Prostate gland (tissue), 2 donors: ENCODE measurements at regions of chr3 and their contacts with region 1.

Region 1: GRCh38 chr3:49133226-49133951 is 539 bp upstream of the LAMB2 start:
- DNase-seq: peak; percentile 83
- H3K4me3 ChIP-seq: peak overlapping the region; percentile 43 to 63
- H3K27ac ChIP-seq: peak overlapping the region; percentile 81
- H3K4me1 ChIP-seq: peaks cover 5% of the 10 kb centered on the region
- H3K27me3 ChIP-seq: no peaks in the 10 kb centered on the region
- CTCF ChIP-seq: peak in 1 of 4 experiments; percentile 2
- POLR2A ChIP-seq: peak; percentile 17

Region 2: DNA sequence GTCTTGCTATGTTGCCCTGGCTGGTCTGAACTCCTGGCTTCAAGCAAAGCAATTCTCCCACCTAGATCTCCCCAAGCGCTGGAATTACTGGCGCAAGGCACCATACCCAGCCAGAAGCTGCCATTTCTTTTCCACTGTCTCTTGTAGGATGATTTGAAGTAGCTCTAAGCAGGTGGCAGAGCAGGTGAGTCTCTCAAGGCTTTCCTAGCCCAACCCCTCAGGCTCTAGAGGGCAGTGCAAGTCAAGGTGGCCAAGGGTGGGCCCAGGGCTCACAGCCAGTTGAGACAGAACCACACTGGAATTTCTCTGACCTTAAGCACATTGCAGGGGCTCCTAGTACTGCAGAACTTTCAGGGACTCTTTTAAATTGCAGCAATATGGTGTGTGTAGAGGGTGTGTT is 321.1 kb after region 1 on chr3:
- intact Hi-C with region 1: no loop called
- DNase-seq: no peak
- H3K4me3 ChIP-seq: no peak overlapping the region
- H3K27ac ChIP-seq: no peak overlapping the region
- H3K4me1 ChIP-seq: no peaks in the 10 kb centered on the region
- H3K27me3 ChIP-seq: no peaks in the 10 kb centered on the region
- CTCF ChIP-seq: peak in 1 of 4 experiments; percentile 20
- POLR2A ChIP-seq: no peak

Region 3: DNA sequence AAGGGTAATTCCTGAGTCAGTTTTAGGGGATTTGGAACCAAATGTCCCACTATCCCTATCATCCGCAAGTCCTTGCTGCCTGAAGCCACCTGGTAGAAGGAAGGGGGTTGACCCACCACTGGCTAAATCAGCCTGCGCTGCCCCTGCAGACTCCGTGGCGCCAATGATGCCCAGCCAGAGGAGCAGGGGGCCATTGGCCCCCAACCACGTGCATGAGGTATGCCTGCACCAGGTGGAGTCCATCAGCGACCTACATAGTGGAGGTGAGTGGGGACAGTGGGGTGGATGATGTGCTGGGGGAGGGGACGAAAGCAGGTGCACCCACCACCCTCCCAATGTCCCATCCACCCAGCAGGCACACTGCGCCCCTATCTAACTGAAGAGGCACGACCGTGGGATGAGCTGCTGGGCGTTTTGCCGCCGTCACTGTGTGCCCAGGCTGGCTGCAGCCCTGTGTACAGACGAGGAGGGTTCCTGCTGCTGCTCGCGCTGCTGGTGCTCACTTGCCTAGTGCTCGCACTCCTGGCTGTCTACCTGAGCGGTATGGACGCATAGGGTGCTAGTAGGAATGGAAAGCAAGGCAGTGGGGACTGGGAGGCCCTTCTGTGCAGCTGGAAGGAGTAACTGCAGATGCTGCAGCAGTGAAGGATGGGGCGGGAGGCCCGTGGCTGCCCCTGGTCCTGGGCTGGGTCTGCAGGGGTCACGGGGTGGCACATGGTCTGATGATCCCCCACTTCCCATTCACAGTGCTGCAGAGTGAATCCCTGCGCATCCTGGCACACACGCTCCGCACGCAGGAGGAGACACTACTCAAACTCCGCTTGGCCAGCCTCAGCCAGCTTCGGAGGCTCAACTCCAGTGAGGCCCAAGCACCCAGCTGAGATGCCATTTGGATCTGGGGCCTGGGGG is 1153.2 kb after region 1 on chr3:
- intact Hi-C with region 1: loop called (anchors 10 kb)
- DNase-seq: no peak
- H3K4me3 ChIP-seq: no peak overlapping the region
- H3K27ac ChIP-seq: no peak overlapping the region
- H3K4me1 ChIP-seq: no peaks in the 10 kb centered on the region
- H3K27me3 ChIP-seq: no peaks in the 10 kb centered on the region
- CTCF ChIP-seq: no peak
- POLR2A ChIP-seq: no peak